Activated CD8-positive, alpha-beta T cell treated with anti-CD3 and anti-CD28 coated beads for 36 hours (primary cell): ENCODE measurements at regions of chr1 and their contacts with region 1.

Region 1: DNA sequence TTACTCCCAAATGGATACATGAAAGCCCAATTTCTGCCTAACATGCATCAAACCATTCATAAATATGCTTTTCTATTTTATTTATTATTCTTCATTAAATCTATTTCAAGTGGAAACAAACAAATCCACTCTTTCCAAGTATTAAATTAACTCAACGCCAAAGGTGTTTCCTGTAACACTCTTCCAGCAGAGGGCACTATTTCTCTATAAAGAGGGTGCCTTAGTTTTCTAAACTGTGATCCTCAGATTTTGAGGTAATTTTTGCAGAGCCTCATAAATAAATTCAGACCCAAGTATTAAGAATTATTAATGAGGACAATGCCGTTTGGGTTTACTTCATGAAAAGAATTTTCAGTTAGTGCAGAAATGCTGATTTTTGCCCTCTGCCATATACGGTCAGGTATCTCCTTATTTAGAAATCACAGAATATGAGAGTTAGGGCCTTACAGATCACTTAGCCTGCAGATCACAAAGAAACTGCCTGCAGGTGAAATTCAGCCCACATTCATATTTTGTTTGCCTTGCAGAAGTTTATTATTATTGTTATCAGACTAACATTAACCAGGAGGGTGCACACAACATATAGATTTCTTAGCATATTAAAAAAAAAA is 40.1 kb upstream of the MYSM1 start:
- DNase-seq: peak; percentile 26
- ATAC-seq: no peak
- H3K4me3 Mint-ChIP-seq: no peak overlapping the region
- H3K27ac Mint-ChIP-seq: no peak overlapping the region
- H3K4me1 Mint-ChIP-seq: no peaks in the 10 kb centered on the region
- H3K27me3 Mint-ChIP-seq: peaks cover 5% of the 10 kb centered on the region
- CTCF ChIP-seq: peak; percentile 79

Region 2: GRCh38 chr1:58611861-58612385 is 128.0 kb before region 1 on chr1:
- CTCF ChIA-PET with region 1: no interaction called
- POLR2A ChIA-PET with region 1: no interaction called
- intact Hi-C with region 1: no loop called
- DNase-seq: no peak
- ATAC-seq: no peak
- H3K4me3 Mint-ChIP-seq: no peak overlapping the region
- H3K27ac Mint-ChIP-seq: no peak overlapping the region
- H3K4me1 Mint-ChIP-seq: no peaks in the 10 kb centered on the region
- H3K27me3 Mint-ChIP-seq: peaks cover 15% of the 10 kb centered on the region
- CTCF ChIP-seq: no peak

Region 3: DNA sequence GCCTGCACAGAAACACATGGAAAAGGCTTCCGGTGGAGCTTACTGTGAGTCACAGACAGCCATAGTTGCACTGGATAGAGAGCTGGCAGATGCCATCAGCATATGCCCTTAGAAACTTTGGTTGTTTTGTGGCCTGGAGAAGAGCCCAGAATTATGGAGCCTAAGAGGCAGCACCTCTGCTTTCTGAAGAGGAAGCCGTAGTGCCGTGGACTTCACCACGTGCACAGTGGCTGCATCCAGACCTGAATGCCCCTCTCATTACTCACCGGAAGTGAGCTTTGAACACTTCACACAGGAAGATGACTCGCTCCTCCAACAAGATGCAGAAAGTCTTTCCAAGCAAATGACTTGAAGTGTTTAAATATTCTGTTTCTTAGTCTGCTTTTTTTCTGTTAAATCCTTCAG is 15.5 kb after region 1 on chr1:
- CTCF ChIA-PET with region 1: interaction called, 21 read pairs
- POLR2A ChIA-PET with region 1: interaction called, 4 read pairs
- intact Hi-C with region 1: no loop called
- DNase-seq: peak; percentile 83
- ATAC-seq: peak; percentile 94
- H3K4me3 Mint-ChIP-seq: peak overlapping the region; percentile 31
- H3K27ac Mint-ChIP-seq: peak overlapping the region; percentile 88
- H3K4me1 Mint-ChIP-seq: peaks cover 46% of the 10 kb centered on the region
- H3K27me3 Mint-ChIP-seq: no peaks in the 10 kb centered on the region
- CTCF ChIP-seq: no peak

Region 4: GRCh38 chr1:59699227-59699847 is 959.4 kb after region 1 on chr1:
- CTCF ChIA-PET with region 1: interaction called, 51 read pairs
- POLR2A ChIA-PET with region 1: interaction called, 3 read pairs
- intact Hi-C with region 1: loop called (anchors 2 kb)
- DNase-seq: peak; percentile 19
- ATAC-seq: peak; percentile 69
- H3K4me3 Mint-ChIP-seq: no peak overlapping the region
- H3K27ac Mint-ChIP-seq: no peak overlapping the region
- H3K4me1 Mint-ChIP-seq: peaks cover 23% of the 10 kb centered on the region
- H3K27me3 Mint-ChIP-seq: no peaks in the 10 kb centered on the region
- CTCF ChIP-seq: peak; percentile 94

Region 5: DNA sequence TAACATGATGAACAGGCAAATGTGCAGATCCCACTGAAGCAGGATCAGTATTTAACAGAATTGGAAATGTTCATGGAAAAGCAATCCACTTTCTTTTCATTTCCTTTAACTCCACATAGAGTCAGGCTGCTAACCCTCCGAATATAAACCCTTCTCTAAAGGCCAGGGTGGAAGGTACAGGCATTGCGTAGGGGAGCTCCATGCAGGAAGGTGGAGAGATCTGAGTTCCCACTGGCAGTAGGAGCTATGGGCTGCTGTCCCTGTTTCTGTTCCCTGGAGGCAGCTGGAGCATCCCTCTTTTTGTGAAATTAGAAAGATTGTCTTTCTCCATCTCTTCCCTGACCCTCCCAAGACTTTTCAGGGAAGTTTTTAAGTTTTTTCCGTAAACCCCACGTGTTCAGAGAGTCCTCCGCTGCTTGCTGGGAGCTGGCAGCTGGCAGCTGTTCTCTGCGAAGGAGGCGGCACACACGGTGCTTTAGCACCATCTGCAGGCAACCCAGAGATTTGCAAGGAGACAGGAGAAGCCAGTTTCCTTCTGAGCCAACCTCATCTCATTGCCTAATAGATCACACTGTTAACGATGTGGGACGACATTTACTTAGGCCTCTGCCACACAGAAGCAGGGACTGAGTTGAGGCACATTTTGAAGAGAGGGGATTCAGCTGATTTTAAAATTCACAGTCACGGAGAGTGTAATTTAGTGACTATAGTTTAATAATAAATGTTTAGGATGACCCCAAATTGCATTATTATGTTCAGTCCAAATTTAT is 1019.4 kb after region 1 on chr1:
- CTCF ChIA-PET with region 1: interaction called, 9 read pairs
- POLR2A ChIA-PET with region 1: no interaction called
- intact Hi-C with region 1: loop called (anchors 5 kb)
- DNase-seq: peak; percentile 78
- ATAC-seq: peak; percentile 97
- H3K4me3 Mint-ChIP-seq: peak overlapping the region; percentile 35
- H3K27ac Mint-ChIP-seq: no peak overlapping the region
- H3K4me1 Mint-ChIP-seq: peaks cover 2% of the 10 kb centered on the region
- H3K27me3 Mint-ChIP-seq: no peaks in the 10 kb centered on the region
- CTCF ChIP-seq: peak; percentile 90